ENCODE measurements at regions of chr15 and their contacts with region 1.

Region 1: GRCh38 chr15:72751751-72752455 is 31.7 kb downstream of the ADPGK start:
- DNase-seq: peak; percentile 8
- ATAC-seq: no peak
- H3K4me3 Mint-ChIP-seq: no peak overlapping the region
- H3K27ac Mint-ChIP-seq: peak overlapping the region; percentile 2
- H3K4me1 Mint-ChIP-seq: peaks cover 23% of the 10 kb centered on the region
- H3K27me3 Mint-ChIP-seq: no peaks in the 10 kb centered on the region
- CTCF ChIP-seq: no peak

Region 2: GRCh38 chr15:72740219-72740618 is 11.7 kb before region 1 on chr15:
- CTCF ChIA-PET with region 1: interaction called, 10 read pairs
- POLR2A ChIA-PET with region 1: interaction called, 4 read pairs
- intact Hi-C with region 1: no loop called
- DNase-seq: no peak
- ATAC-seq: peak; percentile 85
- H3K4me3 Mint-ChIP-seq: no peak overlapping the region
- H3K27ac Mint-ChIP-seq: peak overlapping the region; percentile 76
- H3K4me1 Mint-ChIP-seq: peaks cover 21% of the 10 kb centered on the region
- H3K27me3 Mint-ChIP-seq: no peaks in the 10 kb centered on the region
- CTCF ChIP-seq: no peak

Region 3: GRCh38 chr15:72796515-72797337 is 44.8 kb after region 1 on chr15:
- CTCF ChIA-PET with region 1: no interaction called
- POLR2A ChIA-PET with region 1: no interaction called
- intact Hi-C with region 1: no loop called
- DNase-seq: peak; percentile 33
- ATAC-seq: peak; percentile 84
- H3K4me3 Mint-ChIP-seq: peak overlapping the region; percentile 72
- H3K27ac Mint-ChIP-seq: no peak overlapping the region
- H3K4me1 Mint-ChIP-seq: peaks cover 9% of the 10 kb centered on the region
- H3K27me3 Mint-ChIP-seq: peaks cover 39% of the 10 kb centered on the region
- CTCF ChIP-seq: peak; percentile 65

Measured in activated CD8-positive, alpha-beta T cell treated with anti-CD3 and anti-CD28 coated beads for 36 hours (primary cell).